IMR-90 (cell line): ENCODE measurements at regions of chr1 and their contacts with region 1.

Region 1: GRCh38 chr1:248239478-248239877 is 8.3 kb downstream of the OR2M4 start:
- DNase-seq: no peak
- ATAC-seq: no peak
- H3K4me3 ChIP-seq: no peak overlapping the region
- H3K27ac ChIP-seq: no peak overlapping the region
- H3K4me1 ChIP-seq: no peaks in the 10 kb centered on the region
- H3K27me3 ChIP-seq: no peaks in the 10 kb centered on the region
- CTCF ChIP-seq: no peak
- POLR2A ChIP-seq: no peak
- RAD21 ChIP-seq: no peak

Region 2: DNA sequence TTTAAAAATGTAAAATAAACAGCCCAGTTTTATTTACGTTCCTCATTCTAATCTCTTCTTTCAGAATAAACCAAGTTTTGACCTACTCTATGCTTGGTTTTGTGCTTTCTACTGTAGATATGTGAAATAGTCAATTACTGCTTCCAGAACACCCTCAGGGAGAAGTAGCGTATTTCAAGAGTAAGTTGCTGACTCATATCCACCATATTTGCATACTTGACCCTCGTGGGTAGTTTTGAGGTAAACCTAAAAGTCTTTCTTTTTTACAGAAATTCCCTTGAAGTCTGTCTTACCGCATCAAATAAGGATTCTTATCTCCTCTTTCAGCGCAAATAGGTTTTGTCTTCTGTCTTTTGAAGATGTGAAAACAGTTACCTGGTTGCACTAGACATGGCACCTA is 194.3 kb before region 1 on chr1:
- CTCF ChIA-PET with region 1: no interaction called
- POLR2A ChIA-PET with region 1: no interaction called
- dilution Hi-C with region 1: no loop called
- in situ Hi-C with region 1: no loop called
- intact Hi-C with region 1: no loop called
- DNase-seq: no peak
- ATAC-seq: no peak
- H3K4me3 ChIP-seq: no peak overlapping the region
- H3K27ac ChIP-seq: no peak overlapping the region
- H3K4me1 ChIP-seq: no peaks in the 10 kb centered on the region
- H3K27me3 ChIP-seq: no peaks in the 10 kb centered on the region
- CTCF ChIP-seq: no peak
- POLR2A ChIP-seq: no peak
- RAD21 ChIP-seq: no peak

Region 3: GRCh38 chr1:248055261-248055660 is 184.2 kb before region 1 on chr1:
- CTCF ChIA-PET with region 1: no interaction called
- POLR2A ChIA-PET with region 1: no interaction called
- dilution Hi-C with region 1: no loop called
- in situ Hi-C with region 1: no loop called
- intact Hi-C with region 1: no loop called
- DNase-seq: no peak
- ATAC-seq: no peak
- H3K4me3 ChIP-seq: no peak overlapping the region
- H3K27ac ChIP-seq: no peak overlapping the region
- H3K4me1 ChIP-seq: no peaks in the 10 kb centered on the region
- H3K27me3 ChIP-seq: no peaks in the 10 kb centered on the region
- CTCF ChIP-seq: no peak
- POLR2A ChIP-seq: no peak
- RAD21 ChIP-seq: no peak

Region 4: GRCh38 chr1:248114890-248115289 is 124.6 kb before region 1 on chr1:
- CTCF ChIA-PET with region 1: no interaction called
- POLR2A ChIA-PET with region 1: no interaction called
- dilution Hi-C with region 1: no loop called
- in situ Hi-C with region 1: no loop called
- intact Hi-C with region 1: no loop called
- DNase-seq: no peak
- ATAC-seq: no peak
- H3K4me3 ChIP-seq: no peak overlapping the region
- H3K27ac ChIP-seq: no peak overlapping the region
- H3K4me1 ChIP-seq: no peaks in the 10 kb centered on the region
- H3K27me3 ChIP-seq: no peaks in the 10 kb centered on the region
- CTCF ChIP-seq: no peak
- POLR2A ChIP-seq: no peak
- RAD21 ChIP-seq: no peak

Region 5: GRCh38 chr1:248404024-248404423 is 164.5 kb after region 1 on chr1:
- CTCF ChIA-PET with region 1: no interaction called
- POLR2A ChIA-PET with region 1: no interaction called
- dilution Hi-C with region 1: no loop called
- in situ Hi-C with region 1: no loop called
- intact Hi-C with region 1: no loop called
- DNase-seq: peak; percentile 19
- ATAC-seq: no peak
- H3K4me3 ChIP-seq: no peak overlapping the region
- H3K27ac ChIP-seq: no peak overlapping the region
- H3K4me1 ChIP-seq: no peaks in the 10 kb centered on the region
- H3K27me3 ChIP-seq: no peaks in the 10 kb centered on the region
- CTCF ChIP-seq: no peak
- POLR2A ChIP-seq: no peak
- RAD21 ChIP-seq: no peak

Region 6: GRCh38 chr1:248825909-248826760 is 586.7 kb after region 1 on chr1 and contains the start of gene SH3BP5L:
- CTCF ChIA-PET with region 1: no interaction called
- POLR2A ChIA-PET with region 1: interaction called, 12 read pairs
- dilution Hi-C with region 1: no loop called
- in situ Hi-C with region 1: no loop called
- intact Hi-C with region 1: no loop called
- DNase-seq: peak; percentile 96
- ATAC-seq: peak; percentile 79
- H3K4me3 ChIP-seq: peak within 1 kb of the TSS; percentile 79
- H3K27ac ChIP-seq: peak within 1 kb of the TSS; percentile 96
- H3K4me1 ChIP-seq: peaks cover 18% of the 10 kb centered on the region
- H3K27me3 ChIP-seq: no peaks in the 10 kb centered on the region
- CTCF ChIP-seq: peak; percentile 57
- POLR2A ChIP-seq: peak; percentile 77
- RAD21 ChIP-seq: peak; percentile 32
- total RNA-seq, gene SH3BP5L: 23.3 and 25.0 TPM in 2 replicates